ENCODE measurements at regions of chr3 and their contacts with region 1.

Region 1: DNA sequence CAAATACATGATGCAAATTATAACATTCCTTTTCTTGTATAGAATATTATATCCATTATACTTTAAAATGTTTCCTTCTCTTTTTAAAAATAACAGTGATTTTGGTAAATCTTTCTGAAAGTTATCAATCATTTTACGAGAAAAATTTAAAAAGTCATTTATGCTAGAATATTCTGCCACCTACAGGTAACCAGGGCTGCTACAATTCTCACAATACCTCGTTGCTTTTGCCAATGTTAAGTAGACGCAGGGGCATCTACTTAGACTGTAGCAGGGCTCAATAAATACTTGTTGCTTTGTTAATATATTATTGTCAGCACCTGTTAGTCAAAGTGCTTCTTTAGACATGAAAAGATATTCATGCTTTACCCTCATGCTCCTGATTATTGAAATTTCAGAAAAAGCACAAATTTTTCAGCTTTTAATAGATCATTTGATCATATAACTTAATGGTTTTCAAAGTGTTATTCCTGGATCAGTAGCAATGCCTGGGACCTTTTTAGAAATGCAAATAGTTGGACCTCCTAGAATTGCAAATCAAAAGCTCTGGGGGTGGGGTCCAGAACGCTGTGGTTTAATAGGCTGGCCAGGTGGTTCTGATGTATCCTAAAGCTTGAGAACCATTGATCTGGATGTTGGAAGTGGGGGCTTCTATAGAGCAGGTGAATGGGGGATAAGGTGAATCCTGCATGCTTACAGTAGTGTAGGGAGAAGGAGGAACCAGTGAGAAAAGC is 223.6 kb upstream of the PDZRN3 start:
- DNase-seq: peak; percentile 51
- ATAC-seq: peak; percentile 72
- H3K4me3 ChIP-seq: no peak overlapping the region
- H3K27ac ChIP-seq: no peak overlapping the region
- H3K4me1 ChIP-seq: no peaks in the 10 kb centered on the region
- H3K27me3 ChIP-seq: peaks cover 11% of the 10 kb centered on the region
- CTCF ChIP-seq: peak; percentile 76
- POLR2A ChIP-seq: no peak
- RAD21 ChIP-seq: peak; percentile 77

Region 2: DNA sequence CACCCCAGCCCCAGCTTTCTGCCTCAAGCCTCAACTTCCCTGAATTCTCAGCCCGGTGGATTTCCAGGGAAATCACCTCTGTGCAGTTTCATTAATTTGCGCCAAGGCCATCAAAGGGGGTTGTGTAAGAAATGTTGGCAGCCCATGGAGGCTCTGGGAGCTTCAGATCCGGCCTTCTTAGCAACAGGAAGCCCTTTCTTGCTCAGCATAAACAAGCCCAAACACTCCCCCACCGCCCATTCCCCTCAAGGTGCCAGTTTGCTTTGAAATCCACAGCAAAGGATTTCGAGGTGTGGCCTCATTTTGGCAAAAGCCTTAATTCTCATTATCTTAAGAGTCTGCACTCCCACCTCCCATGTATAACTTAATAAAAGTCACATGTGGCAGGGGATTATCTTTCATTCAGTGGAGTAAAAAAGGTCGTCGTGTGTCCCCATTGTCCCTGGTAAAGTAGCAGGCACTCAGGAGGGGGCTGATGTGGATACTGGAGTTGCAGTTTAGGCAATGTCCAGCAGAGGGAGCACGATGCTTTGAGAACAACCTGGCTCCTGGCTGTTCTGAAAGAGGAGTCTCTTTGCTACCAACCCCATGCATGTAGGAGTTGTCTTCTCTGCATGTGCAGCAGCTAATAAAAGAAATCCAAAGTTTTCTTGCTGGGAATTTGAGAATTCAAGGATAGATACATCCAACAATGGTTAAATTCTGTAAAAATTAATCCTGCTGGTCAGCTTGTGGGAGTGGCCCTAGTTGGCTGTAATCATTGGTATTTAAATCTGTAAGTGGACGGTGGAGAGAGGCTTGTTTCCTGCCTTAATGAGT is 747.4 kb before region 1 on chr3:
- CTCF ChIA-PET with region 1: no interaction called
- POLR2A ChIA-PET with region 1: no interaction called
- dilution Hi-C with region 1: no loop called
- in situ Hi-C with region 1: loop called (anchors 10 kb)
- intact Hi-C with region 1: loop called (anchors 5 kb)
- DNase-seq: peak; percentile 75
- ATAC-seq: peak; percentile 99
- H3K4me3 ChIP-seq: no peak overlapping the region
- H3K27ac ChIP-seq: no peak overlapping the region
- H3K4me1 ChIP-seq: no peaks in the 10 kb centered on the region
- H3K27me3 ChIP-seq: peaks cover 9% of the 10 kb centered on the region
- CTCF ChIP-seq: peak; percentile 87
- POLR2A ChIP-seq: no peak
- RAD21 ChIP-seq: peak; percentile 90

Region 3: DNA sequence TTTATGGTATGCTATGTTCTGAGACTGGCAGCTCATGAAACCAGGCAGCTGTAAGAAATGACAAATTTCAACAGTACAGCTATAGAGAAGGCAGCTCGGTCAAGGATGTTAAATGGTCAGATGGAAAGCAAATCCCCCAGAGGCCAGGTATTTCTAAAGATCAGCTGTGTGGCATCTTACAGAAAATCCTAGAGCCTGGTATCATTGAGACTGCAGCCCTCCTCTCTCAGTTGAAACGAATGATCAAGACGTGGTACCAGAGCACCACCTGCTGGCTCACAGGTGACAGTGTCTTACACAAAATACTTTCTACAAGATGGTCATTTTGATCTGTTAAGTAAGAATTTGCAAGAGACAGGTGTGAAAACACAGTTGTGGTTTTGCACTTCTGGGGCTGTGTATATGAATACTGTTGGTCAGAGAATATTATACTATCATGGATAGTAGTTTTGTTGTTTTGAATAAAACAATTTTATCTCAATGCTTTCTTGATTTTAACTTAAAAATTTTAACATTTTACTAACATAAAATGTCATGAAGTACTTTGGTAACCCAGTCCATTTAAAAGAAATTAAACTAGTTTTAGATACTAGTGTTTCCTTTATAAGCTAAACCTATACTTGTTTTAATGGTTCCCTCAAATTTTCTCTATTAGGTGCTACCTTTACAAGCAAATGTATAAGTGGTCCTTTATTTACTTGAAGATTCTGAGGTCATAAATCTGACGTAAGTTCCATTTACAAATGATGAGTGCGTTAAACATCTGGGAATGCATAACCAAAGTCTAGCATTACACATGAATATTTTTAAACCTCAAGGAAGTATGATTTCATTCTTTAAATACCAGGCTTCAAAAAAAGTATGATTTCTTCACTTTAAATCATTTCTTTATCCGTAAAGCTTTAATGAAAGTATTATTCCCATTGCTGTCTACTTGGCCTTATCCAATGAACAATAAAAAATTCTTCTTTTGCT is 345.4 kb before region 1 on chr3:
- CTCF ChIA-PET with region 1: interaction called, 12 read pairs
- POLR2A ChIA-PET with region 1: no interaction called
- dilution Hi-C with region 1: no loop called
- in situ Hi-C with region 1: loop called (anchors 10 kb)
- intact Hi-C with region 1: loop called (anchors 1 kb)
- DNase-seq: peak; percentile 98
- ATAC-seq: peak; percentile 84
- H3K4me3 ChIP-seq: peak overlapping the region; percentile 1; the same call in 1 of the 2 replicates
- H3K27ac ChIP-seq: peak overlapping the region; percentile 70; the same call in 1 of the 2 replicates
- H3K4me1 ChIP-seq: peaks cover 10% of the 10 kb centered on the region; the same call in 1 of the 2 replicates
- H3K27me3 ChIP-seq: no peaks in the 10 kb centered on the region
- CTCF ChIP-seq: peak; percentile 94
- POLR2A ChIP-seq: no peak
- RAD21 ChIP-seq: peak; percentile 96

Region 4: DNA sequence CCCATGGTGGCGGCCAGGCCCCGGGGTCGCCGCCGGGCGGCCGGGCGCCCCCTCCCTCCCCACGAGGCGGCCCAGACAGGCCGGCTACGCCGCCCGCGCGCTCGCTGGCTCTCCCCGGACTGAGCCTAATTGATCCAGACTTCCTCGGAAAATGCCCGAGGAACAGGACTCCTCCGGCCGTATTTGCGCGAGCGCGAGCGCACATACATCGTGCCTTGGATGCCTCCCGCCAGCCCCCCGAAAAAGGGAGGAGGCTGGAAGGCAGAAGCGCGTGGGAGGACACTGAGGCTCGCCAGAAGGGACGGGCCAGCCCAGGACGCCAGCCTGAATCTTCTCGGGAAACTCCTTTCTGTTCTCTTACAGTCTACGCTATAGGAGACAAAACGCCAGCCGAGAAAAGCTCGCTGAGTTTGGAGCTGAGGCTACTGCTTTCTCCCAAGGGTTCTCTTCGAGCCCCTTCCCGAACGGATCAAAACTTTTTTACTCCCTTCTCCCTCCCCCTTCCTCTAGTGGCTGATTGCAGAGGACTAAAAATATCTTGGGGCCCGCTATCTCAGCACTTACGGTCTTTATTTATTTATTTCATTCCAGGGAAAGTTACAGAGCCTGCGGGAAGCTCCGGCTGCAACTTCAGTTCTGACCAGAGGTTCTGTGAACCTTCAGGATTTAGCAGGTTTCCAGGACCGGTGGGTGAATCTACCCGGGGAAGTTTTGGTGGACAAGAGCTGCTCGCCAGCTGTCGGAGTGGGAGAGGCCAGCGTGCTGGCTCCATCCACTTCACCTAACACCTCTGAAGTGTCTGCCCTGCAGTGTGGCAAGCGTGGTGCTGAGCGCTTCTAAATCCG is 223.3 kb before region 1 on chr3 and contains the start of gene PDZRN3:
- CTCF ChIA-PET with region 1: interaction called, 8 read pairs
- POLR2A ChIA-PET with region 1: no interaction called
- dilution Hi-C with region 1: no loop called
- in situ Hi-C with region 1: loop called (anchors 5 kb)
- intact Hi-C with region 1: loop called (anchors 1 kb)
- DNase-seq: peak; percentile 82
- ATAC-seq: peak; percentile 66
- H3K4me3 ChIP-seq: peak within 1 kb of the TSS; percentile 71
- H3K27ac ChIP-seq: peak within 1 kb of the TSS; percentile 68
- H3K4me1 ChIP-seq: peaks cover 8% of the 10 kb centered on the region
- H3K27me3 ChIP-seq: no peaks in the 10 kb centered on the region
- CTCF ChIP-seq: no peak
- POLR2A ChIP-seq: peak; percentile 71; the same call in 1 of the 2 replicates
- RAD21 ChIP-seq: 0 out of 2 replicates have a peak, but pooled peaks have one; percentile 6
- total RNA-seq, gene PDZRN3: 17.0 and 17.8 TPM in 2 replicates

Region 5: GRCh38 chr3:73786321-73786807 is 62.0 kb before region 1 on chr3:
- CTCF ChIA-PET with region 1: interaction called, 3 read pairs
- POLR2A ChIA-PET with region 1: no interaction called
- dilution Hi-C with region 1: no loop called
- in situ Hi-C with region 1: no loop called
- intact Hi-C with region 1: loop called (anchors 5 kb)
- DNase-seq: peak; percentile 97
- ATAC-seq: peak; percentile 90
- H3K4me3 ChIP-seq: no peak overlapping the region
- H3K27ac ChIP-seq: peak overlapping the region; percentile 16; the same call in 1 of the 2 replicates
- H3K4me1 ChIP-seq: 0 out of 2 replicates have a peak, but pooled peaks cover 2% of the 10 kb centered on the region
- H3K27me3 ChIP-seq: no peaks in the 10 kb centered on the region
- CTCF ChIP-seq: no peak
- POLR2A ChIP-seq: no peak
- RAD21 ChIP-seq: no peak

Region 6: DNA sequence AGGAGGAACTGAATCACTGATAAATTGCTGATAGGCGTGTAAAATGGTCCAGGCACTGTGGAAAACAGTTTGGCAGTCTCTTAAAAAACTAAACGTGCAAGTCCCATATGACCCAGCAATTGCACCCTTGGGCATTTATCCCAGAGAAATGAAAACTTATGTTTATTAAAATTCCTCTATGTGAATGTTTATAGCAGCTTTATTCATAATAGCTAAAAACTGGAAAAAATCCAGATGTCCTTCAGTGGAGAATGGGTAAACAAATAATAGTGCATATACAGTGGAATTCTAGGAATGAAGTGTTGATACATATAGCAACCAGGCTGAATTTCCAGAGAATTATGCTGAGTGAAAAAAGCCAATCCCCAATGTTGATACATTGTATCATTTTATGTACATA is 258.6 kb after region 1 on chr3:
- CTCF ChIA-PET with region 1: no interaction called
- POLR2A ChIA-PET with region 1: no interaction called
- dilution Hi-C with region 1: no loop called
- in situ Hi-C with region 1: no loop called
- intact Hi-C with region 1: no loop called
- DNase-seq: no peak
- ATAC-seq: peak; percentile 76
- H3K4me3 ChIP-seq: no peak overlapping the region
- H3K27ac ChIP-seq: no peak overlapping the region
- H3K4me1 ChIP-seq: peaks cover 3% of the 10 kb centered on the region; the same call in 1 of the 2 replicates
- H3K27me3 ChIP-seq: no peaks in the 10 kb centered on the region
- CTCF ChIP-seq: no peak
- POLR2A ChIP-seq: no peak
- RAD21 ChIP-seq: no peak

Region 7: DNA sequence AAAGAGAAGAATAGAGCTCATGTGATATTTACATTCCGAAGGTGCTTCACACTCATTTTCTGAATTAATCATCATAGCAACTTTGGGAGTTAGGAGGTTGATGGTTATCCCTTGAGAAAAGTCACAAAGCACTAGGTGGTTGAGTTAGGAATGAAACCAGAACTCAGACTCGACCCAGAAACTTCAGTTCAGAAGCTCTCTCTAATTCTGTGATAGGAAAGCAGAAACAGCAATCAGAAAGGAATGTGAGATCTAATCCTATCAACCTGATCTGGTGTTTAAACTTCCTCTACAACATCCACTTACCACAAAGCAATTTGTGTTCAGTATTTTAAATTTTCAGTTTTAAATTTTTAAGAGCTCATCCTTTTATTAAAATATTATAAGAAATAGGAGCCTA is 555.0 kb after region 1 on chr3:
- CTCF ChIA-PET with region 1: no interaction called
- POLR2A ChIA-PET with region 1: no interaction called
- dilution Hi-C with region 1: no loop called
- in situ Hi-C with region 1: no loop called
- intact Hi-C with region 1: no loop called
- DNase-seq: peak; percentile 33
- ATAC-seq: peak; percentile 71
- H3K4me3 ChIP-seq: no peak overlapping the region
- H3K27ac ChIP-seq: no peak overlapping the region
- H3K4me1 ChIP-seq: peaks cover 4% of the 10 kb centered on the region; the same call in 1 of the 2 replicates
- H3K27me3 ChIP-seq: no peaks in the 10 kb centered on the region
- CTCF ChIP-seq: no peak
- POLR2A ChIP-seq: no peak
- RAD21 ChIP-seq: no peak